ENCODE measurements at regions of chr14 and their contacts with region 1.

Region 1: GRCh38 chr14:65815127-65815526 is 402.6 kb downstream of the FUT8 start:
- DNase-seq: no peak
- H3K4me3 Mint-ChIP-seq: no peak overlapping the region
- H3K27ac Mint-ChIP-seq: no peak overlapping the region
- H3K4me1 Mint-ChIP-seq: no peaks in the 10 kb centered on the region
- H3K27me3 Mint-ChIP-seq: no peaks in the 10 kb centered on the region

Region 2: DNA sequence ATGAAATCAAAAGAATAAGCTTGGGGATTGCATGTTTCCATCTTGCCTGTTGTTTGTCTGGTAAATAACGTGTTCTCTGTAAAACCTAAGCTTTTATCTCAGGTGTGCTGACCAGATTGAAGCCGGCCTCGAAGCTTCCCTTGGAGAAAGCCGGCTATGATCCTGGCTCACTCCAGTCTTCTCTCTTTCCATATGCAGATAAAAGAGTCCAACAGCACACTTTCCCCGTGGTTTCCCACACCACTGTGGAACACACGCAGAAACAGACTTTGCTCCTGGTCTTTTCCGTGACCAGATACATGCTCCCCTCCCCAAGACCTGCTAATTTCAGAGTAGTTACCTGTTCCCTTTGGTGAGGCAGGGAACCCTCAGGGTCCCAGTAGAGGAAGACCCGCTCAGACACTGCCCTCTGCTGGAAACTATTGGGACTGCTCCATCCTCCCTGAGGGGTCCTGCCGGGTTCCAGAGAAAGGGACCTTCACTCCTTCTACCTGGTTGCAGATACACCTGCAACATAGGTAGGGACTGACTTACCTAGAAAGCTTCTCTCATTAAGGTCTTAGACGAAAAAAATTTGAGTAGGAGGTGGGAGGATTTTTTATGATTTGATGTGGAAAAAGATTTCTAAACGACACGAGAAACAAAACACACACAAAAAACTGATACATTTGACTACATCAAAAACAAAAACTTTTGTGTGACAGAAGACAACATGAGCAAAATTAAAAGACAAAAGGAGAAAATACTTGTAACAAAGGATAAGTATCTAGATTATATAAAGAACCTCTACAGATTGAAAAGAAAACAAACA is 255.6 kb after region 1 on chr14:
- CTCF ChIA-PET with region 1: interaction called, 10 read pairs
- POLR2A ChIA-PET with region 1: no interaction called
- DNase-seq: peak; percentile 71
- H3K4me3 Mint-ChIP-seq: no peak overlapping the region
- H3K27ac Mint-ChIP-seq: no peak overlapping the region
- H3K4me1 Mint-ChIP-seq: peaks cover 11% of the 10 kb centered on the region
- H3K27me3 Mint-ChIP-seq: peaks cover 12% of the 10 kb centered on the region